B cell (primary cell): ENCODE measurements at regions of chr6 and their contacts with region 1.

Region 1: DNA sequence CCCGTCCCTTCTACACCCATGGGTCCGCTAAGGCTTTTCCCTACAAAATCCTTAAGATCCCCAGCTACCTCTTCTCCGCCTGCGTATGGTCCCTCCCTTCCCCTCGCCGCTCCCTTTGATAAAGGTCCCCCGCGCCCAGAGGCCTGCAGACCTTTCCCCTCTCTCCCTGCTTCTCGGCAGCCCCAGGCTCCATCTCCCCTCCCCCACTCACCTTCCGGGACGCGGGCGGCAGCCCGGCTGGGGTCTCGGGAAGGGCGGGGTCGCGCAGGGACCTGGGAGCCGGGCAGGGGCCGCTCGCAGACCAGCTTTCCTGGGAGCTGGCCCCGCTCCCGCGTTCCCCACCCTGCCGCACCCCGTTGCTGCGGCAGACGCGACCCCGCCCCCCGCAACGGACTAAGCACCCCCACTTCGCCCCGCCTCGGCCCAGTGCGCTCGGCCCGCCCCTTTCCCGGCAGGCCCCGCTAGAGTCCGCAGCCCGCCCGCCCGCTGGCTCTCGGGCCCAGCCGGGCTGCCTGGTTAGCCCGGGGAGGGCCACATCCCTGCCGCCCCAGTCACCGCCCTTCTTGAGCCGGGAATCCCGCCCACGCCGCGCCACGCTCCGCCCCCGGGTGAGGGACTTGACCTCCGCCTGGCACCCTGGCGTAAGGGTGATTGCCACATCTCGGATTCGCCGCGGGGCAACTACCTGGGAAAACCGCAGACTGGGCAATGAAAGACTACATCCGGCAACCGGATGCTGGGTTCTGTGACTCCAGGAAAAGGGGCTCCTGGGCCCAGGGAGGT is at the start of gene FLOT1:
- DNase-seq: peak; percentile 85
- ATAC-seq: peak; percentile 90
- H3K4me3 ChIP-seq: peak within 1 kb of the TSS; percentile 56 to 82 (median 63)
- H3K4me3 Mint-ChIP-seq: peak within 1 kb of the TSS; percentile 87
- H3K27ac ChIP-seq: peak within 1 kb of the TSS in 1 of 2 donors; percentile 61
- H3K27ac Mint-ChIP-seq: peak within 1 kb of the TSS; percentile 77
- H3K4me1 ChIP-seq: peaks cover 18 to 35% of the 10 kb centered on the region in 2 donors
- H3K4me1 Mint-ChIP-seq: peaks cover 46% of the 10 kb centered on the region
- H3K27me3 ChIP-seq: no peaks in the 10 kb centered on the region
- H3K27me3 Mint-ChIP-seq: no peaks in the 10 kb centered on the region
- CTCF ChIP-seq: no peak
- total RNA-seq, gene FLOT1: 71.2 and 75.7 TPM in 2 replicates

Region 2: DNA sequence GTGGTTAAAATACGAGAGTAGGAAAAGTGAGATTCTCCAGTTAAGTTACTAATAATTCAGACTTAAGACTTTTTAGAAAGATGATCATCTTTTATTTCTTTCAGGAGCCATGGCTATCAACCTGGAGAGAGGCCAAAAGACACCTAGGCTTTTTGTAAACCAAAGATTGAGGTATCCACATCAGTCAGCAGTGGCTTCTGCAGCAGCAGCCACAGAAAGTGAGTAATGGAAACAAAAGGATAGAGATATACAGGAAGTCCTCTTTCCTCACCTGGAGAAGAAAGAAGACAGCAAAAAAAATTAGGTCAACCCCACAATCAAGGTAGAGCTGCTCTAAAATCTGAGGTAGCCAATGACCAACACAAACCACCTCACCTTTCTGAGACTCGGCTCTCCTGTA is 438.5 kb before region 1 on chr6:
- CTCF ChIA-PET with region 1: no interaction called
- POLR2A ChIA-PET with region 1: no interaction called
- intact Hi-C with region 1: no loop called
- DNase-seq: no peak
- ATAC-seq: no peak
- H3K4me3 ChIP-seq: no peak overlapping the region
- H3K4me3 Mint-ChIP-seq: no peak overlapping the region
- H3K27ac ChIP-seq: no peak overlapping the region
- H3K27ac Mint-ChIP-seq: no peak overlapping the region
- H3K4me1 ChIP-seq: no peaks in the 10 kb centered on the region
- H3K4me1 Mint-ChIP-seq: no peaks in the 10 kb centered on the region
- H3K27me3 ChIP-seq: no peaks in the 10 kb centered on the region
- H3K27me3 Mint-ChIP-seq: no peaks in the 10 kb centered on the region
- CTCF ChIP-seq: no peak

Region 3: GRCh38 chr6:30571075-30571768 is 171.3 kb before region 1 on chr6 and contains the start of gene ABCF1:
- CTCF ChIA-PET with region 1: no interaction called
- POLR2A ChIA-PET with region 1: no interaction called
- intact Hi-C with region 1: loop called (anchors 5 kb)
- DNase-seq: peak; percentile 99
- ATAC-seq: peak; percentile 98
- H3K4me3 ChIP-seq: peak within 1 kb of the TSS; percentile 69 to 93 (median 87)
- H3K4me3 Mint-ChIP-seq: peak within 1 kb of the TSS; percentile 96
- H3K27ac ChIP-seq: peak within 1 kb of the TSS; percentile 82 to 92
- H3K27ac Mint-ChIP-seq: peak within 1 kb of the TSS; percentile 93
- H3K4me1 ChIP-seq: peaks cover 25 to 32% of the 10 kb centered on the region in 2 donors
- H3K4me1 Mint-ChIP-seq: peaks cover 54% of the 10 kb centered on the region
- H3K27me3 ChIP-seq: no peaks in the 10 kb centered on the region
- H3K27me3 Mint-ChIP-seq: no peaks in the 10 kb centered on the region
- CTCF ChIP-seq: no peak
- total RNA-seq, gene ABCF1: 60.9 and 63.7 TPM in 2 replicates

Region 4: DNA sequence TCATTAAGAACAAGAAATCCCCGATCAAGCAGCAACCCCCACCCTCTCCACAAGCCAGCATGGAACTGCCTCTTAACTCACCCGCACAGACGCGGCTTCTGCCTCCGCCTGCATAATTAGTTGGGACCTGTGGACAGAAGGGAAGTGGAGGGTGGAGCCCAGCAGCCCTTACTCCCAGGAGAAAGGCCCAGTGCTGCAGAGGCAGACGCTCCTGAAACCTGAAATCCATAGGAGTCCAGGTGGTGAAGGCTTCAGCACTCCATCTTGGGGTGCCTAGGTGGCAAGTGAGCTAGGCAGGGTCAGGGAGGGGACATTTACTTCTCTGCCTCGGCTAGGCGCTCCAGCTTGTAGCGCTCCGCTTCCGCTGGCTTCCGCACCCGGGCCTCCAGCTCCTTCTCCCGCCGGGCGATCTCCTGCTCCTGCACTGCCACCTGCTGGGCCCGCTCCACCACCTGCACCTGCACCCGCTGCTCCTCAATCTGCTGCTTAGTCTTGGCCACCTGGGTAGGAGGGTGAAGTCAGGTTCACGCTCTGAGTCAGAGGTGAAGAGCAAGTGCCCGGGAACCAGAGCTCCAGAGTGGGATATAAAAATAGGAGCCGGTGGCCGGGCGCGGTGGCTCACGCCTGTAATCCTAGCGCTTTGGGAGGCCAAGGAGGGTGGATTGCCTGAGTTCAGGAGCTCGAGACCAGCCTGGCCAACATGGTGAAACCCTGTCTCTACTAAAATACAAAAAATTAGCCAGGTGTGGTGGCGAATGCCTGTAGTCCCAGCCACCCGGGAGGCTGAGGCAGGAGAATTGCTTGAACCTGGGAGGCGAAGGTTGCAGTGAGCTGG is 11.7 kb before region 1 on chr6:
- CTCF ChIA-PET with region 1: interaction called, 23 read pairs
- POLR2A ChIA-PET with region 1: no interaction called
- intact Hi-C with region 1: no loop called
- DNase-seq: peak; percentile 86
- ATAC-seq: peak; percentile 89
- H3K4me3 ChIP-seq: peak overlapping the region in 3 of 5 experiments; percentile 5 to 29 (median 25)
- H3K4me3 Mint-ChIP-seq: peak overlapping the region; percentile 40
- H3K27ac ChIP-seq: no peak overlapping the region
- H3K27ac Mint-ChIP-seq: peak overlapping the region; percentile 42
- H3K4me1 ChIP-seq: peaks cover 22 to 23% of the 10 kb centered on the region in 2 donors
- H3K4me1 Mint-ChIP-seq: peaks cover 25% of the 10 kb centered on the region
- H3K27me3 ChIP-seq: no peaks in the 10 kb centered on the region
- H3K27me3 Mint-ChIP-seq: no peaks in the 10 kb centered on the region
- CTCF ChIP-seq: peak; percentile 77

Region 5: DNA sequence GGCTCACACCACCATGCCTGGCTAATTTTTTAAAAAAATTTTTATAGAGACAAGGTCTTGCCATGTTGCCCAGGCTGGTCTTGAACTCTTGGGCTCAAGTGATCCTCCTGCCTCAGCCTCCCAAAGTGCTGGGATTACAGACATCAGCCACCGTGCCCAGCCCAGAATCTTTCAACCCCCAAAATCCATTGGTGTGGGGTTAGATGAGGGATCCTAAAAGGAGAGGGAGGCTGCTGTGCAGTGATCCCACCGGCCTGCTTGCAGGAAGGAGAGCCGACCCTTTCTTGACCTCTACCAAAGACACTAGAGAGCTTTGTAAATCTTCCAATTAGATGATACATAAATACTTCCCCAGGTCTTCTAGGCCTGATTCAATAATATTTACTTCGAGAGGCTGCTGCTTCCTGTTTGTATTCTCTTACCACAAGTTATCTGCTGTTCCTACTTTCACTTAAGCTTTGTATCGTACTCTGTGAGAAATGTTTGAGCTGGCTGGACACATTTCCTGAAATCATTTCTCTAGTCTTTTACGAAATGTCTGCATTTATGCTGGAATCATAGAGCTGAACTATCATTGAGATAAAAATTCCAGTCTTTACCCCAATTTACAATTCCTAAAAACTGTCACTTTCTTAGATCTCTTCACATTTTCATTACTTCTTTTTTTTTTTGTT is 51.2 kb after region 1 on chr6:
- CTCF ChIA-PET with region 1: no interaction called
- POLR2A ChIA-PET with region 1: no interaction called
- intact Hi-C with region 1: loop called (anchors 10 kb)
- DNase-seq: peak; percentile 54
- ATAC-seq: peak; percentile 75
- H3K4me3 ChIP-seq: peak overlapping the region in 2 of 5 experiments; percentile 8 to 35
- H3K4me3 Mint-ChIP-seq: peak overlapping the region; percentile 81
- H3K27ac ChIP-seq: peak overlapping the region; percentile 77 to 88
- H3K27ac Mint-ChIP-seq: peak overlapping the region; percentile 91
- H3K4me1 ChIP-seq: peaks cover 15 to 17% of the 10 kb centered on the region in 2 donors
- H3K4me1 Mint-ChIP-seq: peaks cover 16% of the 10 kb centered on the region
- H3K27me3 ChIP-seq: peaks cover 0 to 8% (median 3%) of the 10 kb centered on the region in 4 experiments
- H3K27me3 Mint-ChIP-seq: peaks cover 21% of the 10 kb centered on the region
- CTCF ChIP-seq: no peak

Region 6: GRCh38 chr6:30821862-30822782 is 79.6 kb after region 1 on chr6:
- CTCF ChIA-PET with region 1: interaction called, 6 read pairs
- POLR2A ChIA-PET with region 1: no interaction called
- intact Hi-C with region 1: loop called (anchors 2 kb)
- DNase-seq: peak; percentile 57
- ATAC-seq: no peak
- H3K4me3 ChIP-seq: no peak overlapping the region
- H3K4me3 Mint-ChIP-seq: no peak overlapping the region
- H3K27ac ChIP-seq: no peak overlapping the region
- H3K27ac Mint-ChIP-seq: no peak overlapping the region
- H3K4me1 ChIP-seq: no peaks in the 10 kb centered on the region
- H3K4me1 Mint-ChIP-seq: peaks cover 11% of the 10 kb centered on the region
- H3K27me3 ChIP-seq: no peaks in the 10 kb centered on the region
- H3K27me3 Mint-ChIP-seq: peaks cover 2% of the 10 kb centered on the region
- CTCF ChIP-seq: peak; percentile 74

Region 7: DNA sequence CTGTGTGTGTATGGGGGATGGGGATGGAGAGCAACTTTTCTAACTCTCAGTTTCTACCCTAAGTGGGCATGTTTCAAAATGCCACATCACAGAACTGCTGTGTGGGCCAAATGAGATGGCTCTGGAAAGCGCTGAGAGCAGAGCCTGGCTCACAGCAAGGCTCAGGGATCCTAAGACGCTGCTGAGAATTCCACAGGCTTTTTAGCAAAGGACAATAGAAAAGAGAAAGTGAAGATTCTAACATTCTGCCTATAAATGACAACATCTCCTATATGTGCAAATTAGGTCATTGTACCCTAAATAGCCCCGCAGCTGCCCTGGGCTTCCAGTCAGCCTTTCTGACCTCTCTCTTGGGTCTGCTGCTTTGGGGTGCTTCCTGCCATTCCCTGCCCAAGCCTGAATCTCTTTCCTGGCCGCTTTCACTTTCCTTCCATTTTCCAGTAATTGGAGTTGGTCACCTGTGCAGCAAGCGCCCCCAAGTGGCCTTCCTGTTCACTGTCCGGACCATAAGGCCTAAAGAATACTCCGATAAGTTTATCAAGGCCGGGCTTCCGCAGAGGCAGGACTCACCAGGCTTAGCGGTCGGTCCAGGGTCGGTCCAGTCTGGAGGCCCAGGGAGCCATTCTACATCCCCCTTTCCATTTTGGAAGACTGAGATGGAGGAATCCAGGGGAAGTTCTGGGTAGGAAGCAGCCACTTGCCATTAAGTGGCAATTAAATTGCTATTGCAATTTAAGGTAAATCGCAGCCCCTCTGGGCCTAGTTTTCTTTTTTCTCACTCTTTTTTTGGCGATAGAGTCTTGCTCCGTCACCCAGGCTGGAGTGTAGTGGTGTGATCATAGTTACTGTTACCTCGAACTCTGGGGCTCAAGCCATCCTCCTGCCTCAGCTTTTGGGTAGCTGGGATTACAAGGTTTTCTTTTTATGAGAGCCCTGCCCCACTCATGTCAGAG is 135.2 kb after region 1 on chr6:
- CTCF ChIA-PET with region 1: no interaction called
- POLR2A ChIA-PET with region 1: no interaction called
- intact Hi-C with region 1: loop called (anchors 2 kb)
- DNase-seq: peak; percentile 79
- ATAC-seq: peak; percentile 82
- H3K4me3 ChIP-seq: peak overlapping the region in 1 of 5 experiments; percentile 21
- H3K4me3 Mint-ChIP-seq: peak overlapping the region; percentile 48
- H3K27ac ChIP-seq: peak overlapping the region in 1 of 2 donors; percentile 44
- H3K27ac Mint-ChIP-seq: peak overlapping the region; percentile 54
- H3K4me1 ChIP-seq: peaks cover 27 to 28% of the 10 kb centered on the region in 2 donors
- H3K4me1 Mint-ChIP-seq: peaks cover 37% of the 10 kb centered on the region
- H3K27me3 ChIP-seq: no peaks in the 10 kb centered on the region
- H3K27me3 Mint-ChIP-seq: peaks cover 3% of the 10 kb centered on the region
- CTCF ChIP-seq: peak; percentile 82

Region 8: GRCh38 chr6:30903236-30903635 is 160.7 kb after region 1 on chr6:
- CTCF ChIA-PET with region 1: no interaction called
- POLR2A ChIA-PET with region 1: no interaction called
- intact Hi-C with region 1: no loop called
- DNase-seq: peak; percentile 54
- ATAC-seq: no peak
- H3K4me3 ChIP-seq: peak overlapping the region in 1 of 5 experiments; percentile 6
- H3K4me3 Mint-ChIP-seq: no peak overlapping the region
- H3K27ac ChIP-seq: peak overlapping the region in 1 of 2 donors; percentile 10
- H3K27ac Mint-ChIP-seq: no peak overlapping the region
- H3K4me1 ChIP-seq: peaks cover 17 to 28% of the 10 kb centered on the region in 2 donors
- H3K4me1 Mint-ChIP-seq: peaks cover 23% of the 10 kb centered on the region
- H3K27me3 ChIP-seq: no peaks in the 10 kb centered on the region
- H3K27me3 Mint-ChIP-seq: no peaks in the 10 kb centered on the region
- CTCF ChIP-seq: no peak

Region 9: GRCh38 chr6:30974488-30975252 is 232.2 kb after region 1 on chr6:
- CTCF ChIA-PET with region 1: no interaction called
- POLR2A ChIA-PET with region 1: no interaction called
- intact Hi-C with region 1: no loop called
- DNase-seq: no peak
- ATAC-seq: no peak
- H3K4me3 ChIP-seq: no peak overlapping the region
- H3K4me3 Mint-ChIP-seq: no peak overlapping the region
- H3K27ac ChIP-seq: no peak overlapping the region
- H3K27ac Mint-ChIP-seq: no peak overlapping the region
- H3K4me1 ChIP-seq: peaks cover 0 to 6% of the 10 kb centered on the region in 2 donors
- H3K4me1 Mint-ChIP-seq: peaks cover 7% of the 10 kb centered on the region
- H3K27me3 ChIP-seq: peaks cover 0 to 9% (median 5%) of the 10 kb centered on the region in 4 experiments
- H3K27me3 Mint-ChIP-seq: peaks cover 32% of the 10 kb centered on the region
- CTCF ChIP-seq: no peak

Region 10: DNA sequence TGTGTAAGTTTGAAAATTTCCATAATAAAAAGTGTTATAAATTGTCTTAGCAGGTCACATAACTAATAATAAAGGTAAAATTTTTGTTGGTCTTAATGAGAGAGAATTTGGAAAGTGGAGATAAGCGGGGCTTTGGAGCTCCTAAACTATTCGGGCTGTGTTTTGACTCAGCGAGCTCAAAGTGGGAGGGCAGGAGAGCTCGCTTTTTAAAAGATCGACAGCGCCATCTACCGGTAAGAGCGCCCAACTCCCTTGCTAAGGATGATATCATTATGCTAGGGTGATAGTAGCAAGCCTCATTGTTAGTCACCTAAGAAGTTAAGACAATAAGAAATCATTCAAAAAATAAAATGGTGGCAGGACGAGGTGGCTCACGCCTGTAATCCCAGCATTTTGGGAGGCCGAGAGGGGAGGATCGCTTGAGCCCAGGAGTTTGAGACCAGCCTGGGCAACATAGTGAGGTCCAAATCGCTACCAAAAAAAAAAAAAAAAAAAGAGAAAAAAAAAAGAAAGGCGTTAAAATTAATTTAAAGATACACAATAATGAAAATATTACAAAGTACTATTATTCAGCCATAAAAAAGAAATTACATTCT is 345.1 kb after region 1 on chr6:
- CTCF ChIA-PET with region 1: no interaction called
- POLR2A ChIA-PET with region 1: no interaction called
- intact Hi-C with region 1: loop called (anchors 2 kb)
- DNase-seq: peak; percentile 89
- ATAC-seq: peak; percentile 95
- H3K4me3 ChIP-seq: no peak overlapping the region
- H3K4me3 Mint-ChIP-seq: no peak overlapping the region
- H3K27ac ChIP-seq: no peak overlapping the region
- H3K27ac Mint-ChIP-seq: no peak overlapping the region
- H3K4me1 ChIP-seq: no peaks in the 10 kb centered on the region
- H3K4me1 Mint-ChIP-seq: no peaks in the 10 kb centered on the region
- H3K27me3 ChIP-seq: no peaks in the 10 kb centered on the region
- H3K27me3 Mint-ChIP-seq: peaks cover 21% of the 10 kb centered on the region
- CTCF ChIP-seq: peak; percentile 84